Heart right ventricle (tissue), 16 donors: ENCODE measurements at regions of chr2 and their contacts with region 1.

Region 1: DNA sequence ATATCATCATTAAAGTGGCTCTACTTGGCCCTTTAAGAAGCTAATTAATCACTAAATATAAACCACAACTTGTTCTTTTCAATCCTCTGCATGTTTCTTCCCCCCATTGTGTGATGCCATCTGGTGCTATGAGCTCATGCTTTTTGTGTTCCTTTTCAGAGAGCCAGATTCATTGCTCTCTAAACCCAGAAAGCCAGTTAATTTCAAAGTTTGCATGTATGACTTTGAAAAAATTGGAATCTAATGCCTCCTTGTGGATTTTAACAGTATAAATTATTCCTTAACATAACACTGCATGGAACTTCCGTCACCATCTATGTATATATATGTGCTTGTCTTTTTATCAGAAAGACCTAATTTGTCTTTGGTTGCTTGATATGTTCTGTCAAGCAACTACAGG is 31.1 kb downstream of the TMEM178A start:
- DNase-seq: peak in 1 of 2 donors; percentile 12
- ATAC-seq: peak; percentile 44 to 86 (median 73)
- H3K4me3 ChIP-seq: no peak overlapping the region
- H3K27ac ChIP-seq: peak overlapping the region in 8 of 10 donors; percentile 37 to 75 (median 56)
- H3K4me1 ChIP-seq: peaks cover 0 to 34% (median 22%) of the 10 kb centered on the region in 9 donors
- H3K27me3 ChIP-seq: no peaks in the 10 kb centered on the region
- CTCF ChIP-seq: peak; percentile 16 to 72 (median 53)

Region 2: GRCh38 chr2:39593439-39594393 is 103.1 kb before region 1 on chr2:
- intact Hi-C with region 1: loop called (anchors 1 to 10 kb)
- DNase-seq: peak in 1 of 2 donors; percentile 70
- ATAC-seq: peak; percentile 71 to 92 (median 88)
- H3K4me3 ChIP-seq: no peak overlapping the region
- H3K27ac ChIP-seq: peak overlapping the region in 1 of 10 donors; percentile 11
- H3K4me1 ChIP-seq: peaks cover 0 to 11% (median 6%) of the 10 kb centered on the region in 9 donors
- H3K27me3 ChIP-seq: no peaks in the 10 kb centered on the region
- CTCF ChIP-seq: peak; percentile 44 to 74 (median 64)

Region 3: DNA sequence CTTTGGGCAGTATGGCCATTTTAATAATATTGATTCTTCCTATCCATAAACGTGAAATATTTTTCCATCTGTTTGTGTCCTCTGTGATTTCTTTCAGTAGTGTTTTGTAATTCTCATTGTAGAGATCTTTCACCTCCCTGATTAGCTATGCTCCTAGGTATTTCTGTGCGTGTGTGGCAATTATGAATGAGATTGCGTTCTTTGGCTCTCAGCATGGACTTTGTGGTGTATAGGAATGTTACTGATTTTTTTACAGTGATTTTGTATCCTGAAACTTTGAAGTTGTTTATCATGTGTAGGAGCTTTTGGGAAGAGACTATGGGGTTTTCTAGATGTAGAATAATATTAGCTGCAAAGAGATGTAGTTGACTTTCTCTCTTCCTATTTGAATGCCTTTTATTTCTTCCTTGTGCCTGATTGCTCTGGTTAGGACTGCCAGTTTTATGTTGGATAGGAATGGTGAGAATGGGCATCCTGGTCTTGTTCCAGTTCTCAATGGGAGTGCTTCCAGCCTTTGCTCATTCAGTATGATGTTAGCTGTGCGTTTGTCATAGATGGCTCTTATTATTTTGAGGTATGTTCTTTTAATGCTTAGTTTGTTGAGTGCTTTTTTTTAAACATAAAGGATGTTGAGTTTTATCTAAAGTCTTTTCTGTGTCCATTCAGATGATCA is 109.2 kb after region 1 on chr2:
- intact Hi-C with region 1: no loop called
- DNase-seq: no peak
- ATAC-seq: peak in 4 of 8 donors; percentile 37 to 91 (median 58)
- H3K4me3 ChIP-seq: no peak overlapping the region
- H3K27ac ChIP-seq: peak overlapping the region in 1 of 10 donors; percentile 30
- H3K4me1 ChIP-seq: peaks cover 0 to 4% (median 0%) of the 10 kb centered on the region in 9 donors
- H3K27me3 ChIP-seq: no peaks in the 10 kb centered on the region
- CTCF ChIP-seq: no peak